ENCODE measurements at regions of chr10 and their contacts with region 1.

Region 1: GRCh38 chr10:104349623-104350126 is 4.0 kb upstream of the CFAP58 start:
- DNase-seq: peak; percentile 71
- H3K4me3 ChIP-seq: no peak overlapping the region
- H3K27ac ChIP-seq: peak overlapping the region; percentile 90
- H3K4me1 ChIP-seq: peaks cover 29% of the 10 kb centered on the region
- H3K27me3 ChIP-seq: no peaks in the 10 kb centered on the region

Region 2: DNA sequence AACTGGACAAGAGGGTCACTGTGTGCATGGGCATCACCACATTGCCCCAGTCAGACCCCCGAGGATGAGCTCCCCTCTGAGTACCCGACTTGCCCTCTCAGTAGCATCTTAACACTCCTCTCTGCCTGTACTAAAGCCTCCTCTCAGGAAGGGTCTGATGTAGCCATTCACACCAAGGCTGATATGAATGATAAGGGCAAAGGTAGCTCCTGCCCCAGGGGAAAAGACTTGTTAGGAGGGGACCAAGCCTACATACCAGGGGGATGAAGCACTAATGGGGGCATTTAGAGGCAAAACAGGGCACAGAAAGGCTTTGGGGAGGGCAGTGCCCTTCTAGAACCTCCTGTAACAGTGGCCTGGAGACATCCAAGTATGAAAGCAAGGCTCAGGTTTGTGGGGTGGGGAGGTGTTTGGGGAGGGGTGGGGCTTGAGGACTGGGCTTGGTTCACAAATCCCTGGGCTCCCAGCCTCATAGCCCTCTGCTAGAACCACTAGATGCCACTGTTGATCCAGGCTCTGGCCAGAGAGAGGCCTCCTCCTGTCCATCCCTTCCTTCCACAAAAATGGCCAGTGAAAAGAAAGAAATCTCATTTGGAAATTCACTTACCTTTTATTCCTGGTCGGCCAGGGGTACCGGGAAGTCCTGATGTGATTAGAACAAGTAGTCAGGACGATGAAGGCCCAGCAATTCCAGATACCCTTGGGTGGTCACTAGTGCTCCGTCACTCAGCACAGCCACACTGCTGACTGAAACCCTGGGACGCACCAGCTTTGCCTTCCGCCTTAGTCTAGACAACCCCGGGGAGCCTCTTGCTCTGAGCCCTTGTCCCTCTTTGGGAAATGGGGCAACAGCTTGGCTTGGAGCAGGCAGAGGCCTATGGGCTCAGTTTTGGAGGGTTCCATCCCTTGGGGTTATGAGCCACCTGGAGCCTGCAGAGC is 304.3 kb before region 1 on chr10:
- in situ Hi-C with region 1: loop called (anchors 5 kb)
- DNase-seq: peak; percentile 89
- H3K4me3 ChIP-seq: no peak overlapping the region
- H3K27ac ChIP-seq: no peak overlapping the region
- H3K4me1 ChIP-seq: peaks cover 15% of the 10 kb centered on the region
- H3K27me3 ChIP-seq: no peaks in the 10 kb centered on the region

Region 3: DNA sequence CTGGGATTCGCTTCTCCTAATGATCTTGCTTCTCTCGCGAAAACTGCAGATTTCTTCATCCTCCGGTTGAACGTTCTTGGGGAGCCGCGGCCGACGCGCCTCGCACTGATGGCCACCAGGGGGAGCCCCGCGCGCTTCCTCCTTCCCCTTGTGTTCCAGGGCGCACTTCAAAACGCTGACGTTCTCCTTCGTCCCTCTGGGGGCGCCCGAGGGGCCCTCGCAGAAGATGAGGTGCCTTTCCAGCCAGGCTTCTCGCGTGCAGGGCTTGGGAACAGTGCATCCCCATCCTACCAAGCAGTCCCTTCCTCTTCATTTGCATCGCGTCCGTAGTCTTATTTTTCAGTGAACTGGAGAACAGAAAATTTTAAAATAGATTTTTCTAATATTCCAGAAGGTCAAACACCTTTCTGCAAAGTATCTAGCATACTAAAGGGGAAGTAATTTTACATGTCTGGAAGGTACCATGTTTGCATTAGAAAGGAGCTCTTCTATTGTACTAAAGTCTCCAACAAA is 58.2 kb before region 1 on chr10:
- in situ Hi-C with region 1: loop called (anchors 10 kb)
- DNase-seq: peak; percentile 95
- H3K4me3 ChIP-seq: no peak overlapping the region
- H3K27ac ChIP-seq: no peak overlapping the region
- H3K4me1 ChIP-seq: peaks cover 18% of the 10 kb centered on the region
- H3K27me3 ChIP-seq: no peaks in the 10 kb centered on the region

Region 4: DNA sequence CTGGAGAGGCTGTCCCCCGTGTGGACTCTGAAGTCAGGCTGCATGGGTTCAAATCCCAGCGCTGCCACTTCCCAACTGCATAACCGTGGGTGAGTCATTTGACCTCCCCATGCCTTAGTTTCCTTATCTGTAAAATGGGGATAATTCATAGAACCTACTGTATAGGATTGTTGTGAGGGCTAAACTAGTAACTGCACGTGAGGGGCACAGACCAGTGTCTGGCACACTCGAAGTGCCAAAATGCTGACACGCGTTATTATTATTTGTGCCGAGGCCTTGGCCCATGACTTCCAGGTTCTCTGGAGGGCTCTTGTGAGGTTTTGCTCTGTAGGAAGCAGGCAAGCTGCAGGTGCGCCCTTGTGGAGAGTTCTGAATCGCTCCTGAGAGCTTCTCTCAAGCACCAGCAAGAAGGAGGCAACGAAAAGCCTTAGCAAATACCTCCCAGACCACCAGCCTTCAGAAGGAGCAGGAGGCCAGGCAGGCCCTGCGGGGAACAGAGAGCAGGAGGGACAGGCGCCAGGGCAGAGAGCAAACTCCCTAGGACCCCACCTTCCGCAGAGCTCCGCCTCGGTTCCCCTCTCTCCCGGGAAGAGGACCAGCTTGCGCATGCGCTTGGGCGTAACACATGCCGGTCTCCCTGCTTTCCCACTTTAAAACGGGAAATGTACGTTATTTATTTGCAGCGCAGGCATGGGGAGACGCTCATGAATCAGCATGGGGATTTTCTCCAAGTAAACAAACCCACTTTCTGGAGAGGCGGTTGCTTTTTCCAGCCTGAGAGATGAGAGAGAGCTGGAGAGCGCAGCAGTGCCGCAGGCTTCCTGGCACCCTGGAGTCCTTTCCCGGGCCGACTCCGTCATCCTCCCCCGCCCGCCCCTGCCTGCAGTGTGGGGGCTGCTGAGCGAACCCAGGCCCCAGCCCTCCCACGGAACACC is 331.1 kb after region 1 on chr10:
- in situ Hi-C with region 1: no loop called
- DNase-seq: peak; percentile 19
- H3K4me3 ChIP-seq: peak overlapping the region; percentile 49; the same call in 1 of the 2 replicates
- H3K27ac ChIP-seq: no peak overlapping the region
- H3K4me1 ChIP-seq: no peaks in the 10 kb centered on the region
- H3K27me3 ChIP-seq: 0 out of 2 replicates have a peak, but pooled peaks cover 3% of the 10 kb centered on the region

Region 5: DNA sequence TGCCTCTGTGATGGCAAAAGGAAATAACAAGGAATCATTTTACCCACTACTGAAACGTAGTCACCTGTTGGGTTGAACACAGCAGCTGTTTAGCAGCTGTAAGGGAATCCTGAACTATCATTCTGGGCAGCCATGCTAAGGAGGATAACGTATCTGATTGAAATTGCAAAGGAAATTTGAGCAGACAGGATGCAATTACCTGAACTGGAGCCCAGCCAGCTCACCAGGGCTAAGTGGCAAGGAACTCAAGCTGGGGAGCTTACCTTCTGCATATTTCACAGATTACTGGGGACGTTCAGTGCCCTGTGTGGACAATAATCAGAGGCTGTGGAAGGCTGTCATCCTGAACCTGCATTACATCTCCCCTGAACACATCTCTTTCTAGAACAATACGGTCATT is 941.9 kb after region 1 on chr10:
- in situ Hi-C with region 1: no loop called
- DNase-seq: no peak
- H3K4me3 ChIP-seq: no peak overlapping the region
- H3K27ac ChIP-seq: no peak overlapping the region
- H3K4me1 ChIP-seq: no peaks in the 10 kb centered on the region
- H3K27me3 ChIP-seq: no peaks in the 10 kb centered on the region

Measured in GM23248 (cell line).